Posterior vena cava (tissue), 2 donors: ENCODE measurements at regions of chr16 and their contacts with region 1.

Region 1: DNA sequence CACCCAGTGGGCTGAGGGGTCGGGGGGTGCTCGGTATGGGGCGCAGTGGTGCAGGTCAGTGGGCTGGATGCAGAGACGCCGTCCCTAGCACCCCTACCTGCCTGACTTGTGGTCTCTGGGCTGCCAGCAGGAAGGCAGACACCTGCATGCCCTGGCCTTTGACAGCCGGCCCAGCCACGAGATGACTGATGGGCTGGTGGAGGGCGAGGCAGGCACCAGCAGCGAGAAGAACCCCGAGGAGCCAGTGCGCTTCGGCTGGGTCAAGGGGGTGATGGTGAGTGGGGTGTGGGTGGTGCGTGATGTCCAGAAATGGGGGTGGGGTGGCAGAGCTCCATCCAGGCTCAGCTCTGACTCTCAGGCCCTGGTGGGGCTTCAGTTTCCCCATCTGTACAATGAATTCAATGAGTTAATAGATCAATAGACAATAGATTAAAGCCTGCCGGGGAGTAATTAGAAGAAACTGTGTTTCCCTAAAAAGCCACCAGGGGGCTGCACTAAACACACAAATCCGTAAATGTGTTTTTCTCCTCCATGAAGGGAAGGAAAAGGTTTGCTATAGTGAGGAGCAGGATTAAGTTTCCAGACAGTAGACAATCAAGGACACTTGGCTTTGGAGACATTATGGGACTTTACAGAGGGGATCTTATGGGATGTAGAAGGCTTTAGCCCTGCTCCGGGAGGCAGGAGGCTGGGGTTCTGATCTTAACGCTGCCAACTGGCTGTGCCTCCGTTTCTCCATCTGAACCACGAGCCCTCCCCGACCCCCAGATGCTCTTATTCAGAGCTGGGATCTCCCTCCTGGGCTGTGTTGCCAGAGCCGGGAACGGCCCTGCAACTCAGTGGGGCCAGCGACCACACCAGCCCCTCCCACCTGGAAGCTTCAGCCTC is 2.2 kb downstream of the SLC12A3 start:
- DNase-seq: no peak

Region 2: DNA sequence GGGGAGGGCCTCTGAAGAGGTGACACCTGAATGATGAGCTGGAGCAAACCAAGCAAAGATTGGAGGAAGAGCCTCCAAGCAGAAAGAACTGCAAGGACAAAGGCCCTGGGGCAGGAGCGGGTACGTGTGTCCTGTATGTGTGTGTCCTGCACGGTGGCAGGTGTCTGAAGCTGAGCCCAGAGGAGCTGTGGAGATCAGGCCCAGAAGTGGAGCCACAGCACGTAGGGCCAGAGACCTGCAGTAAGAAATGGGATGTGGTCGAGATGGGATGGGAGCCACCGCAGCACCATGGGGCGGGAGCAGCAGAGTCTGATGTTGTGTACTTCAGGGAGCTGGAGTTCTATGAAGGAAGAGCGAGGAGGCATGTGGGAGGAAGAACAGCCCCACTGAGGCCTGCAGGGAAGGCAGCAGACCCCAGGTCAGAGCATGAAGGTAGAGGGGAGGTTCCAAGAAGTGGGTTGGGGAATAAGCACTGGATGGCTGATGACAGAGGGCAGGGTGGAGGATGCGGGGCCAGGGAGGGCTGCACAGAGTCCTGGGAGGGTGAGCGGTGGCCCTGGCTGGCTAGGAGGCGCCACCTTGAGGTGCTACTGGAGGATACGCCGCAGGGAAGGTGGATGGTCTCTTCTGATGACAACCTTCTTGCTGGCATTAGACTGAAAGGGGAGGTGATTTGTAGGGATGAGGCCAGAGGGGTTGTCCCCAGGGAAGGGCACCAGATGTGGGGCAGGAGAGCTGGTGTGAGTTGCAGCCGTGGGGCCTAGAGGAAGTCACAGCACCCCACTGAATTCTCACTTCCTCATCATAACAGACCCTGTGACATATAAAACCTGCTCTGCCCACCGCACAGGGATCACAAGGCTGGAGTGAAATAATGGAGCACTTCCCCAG is 83.9 kb after region 1 on chr16:
- intact Hi-C with region 1: loop called (anchors 10 kb)
- DNase-seq: peak; percentile 83

Region 3: DNA sequence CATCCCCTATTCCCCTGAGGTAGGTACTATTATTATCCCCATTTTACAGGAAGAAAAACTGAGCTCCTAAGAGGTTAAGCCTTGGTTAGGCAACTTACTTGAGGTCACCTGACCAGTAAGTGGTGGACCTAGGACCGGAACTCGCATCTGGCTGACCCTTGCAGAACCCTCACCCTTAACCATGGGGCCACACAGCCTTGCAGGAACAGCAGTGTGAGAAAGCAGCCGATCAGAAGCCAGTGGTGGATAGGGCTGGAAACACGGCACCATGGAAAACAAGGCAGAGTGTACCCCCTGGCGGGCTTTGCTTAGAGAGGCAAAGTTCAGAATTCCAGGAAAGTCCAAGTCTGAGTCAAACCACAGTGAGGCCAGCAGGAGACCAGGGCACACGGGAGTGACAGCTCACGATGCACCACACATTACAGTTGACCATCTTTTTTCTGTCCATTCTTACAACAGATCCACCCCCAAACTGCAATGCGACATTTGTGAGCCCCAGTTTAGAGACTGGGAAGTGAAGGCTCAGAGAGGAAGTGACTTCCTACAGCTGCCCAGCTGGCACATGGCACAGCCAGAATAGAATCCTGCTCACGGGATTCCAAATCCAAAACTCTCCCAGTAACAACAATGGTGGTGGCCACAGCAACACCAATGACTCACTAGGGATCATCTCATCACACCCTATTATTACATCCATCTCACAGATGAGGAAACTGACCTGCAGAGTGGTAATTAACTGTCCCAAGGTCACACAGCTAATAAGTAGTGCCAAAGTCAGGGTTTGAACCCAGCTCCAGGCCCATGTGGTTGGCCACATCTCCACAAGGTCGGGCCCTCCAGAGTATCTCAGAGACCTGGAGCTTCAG is 914.8 kb after region 1 on chr16:
- intact Hi-C with region 1: no loop called
- DNase-seq: no peak